Motor neuron (in vitro differentiated cells): ENCODE measurements at regions of chr10 and their contacts with region 1.

Region 1: GRCh38 chr10:28676968-28677887 is at the start of gene BAMBI:
- ATAC-seq: peak; percentile 92 to 95 (median 94)
- H3K4me3 ChIP-seq: peak within 1 kb of the TSS; percentile 69 to 84 (median 76)
- H3K27ac ChIP-seq: peak within 1 kb of the TSS in 1 of 2 donors; percentile 56
- H3K4me1 ChIP-seq: peaks cover 16 to 26% of the 10 kb centered on the region in 2 donors
- total RNA-seq, gene BAMBI: 0.97 to 47.8 (median 8.1) TPM

Region 2: GRCh38 chr10:28432210-28432676 is 245.0 kb before region 1 on chr10:
- in situ Hi-C with region 1: no loop called
- ATAC-seq: peak in 6 of 8 experiments; percentile 53 to 97 (median 82)
- H3K4me3 ChIP-seq: no peak overlapping the region
- H3K27ac ChIP-seq: no peak overlapping the region
- H3K4me1 ChIP-seq: no peaks in the 10 kb centered on the region

Region 3: GRCh38 chr10:28503114-28503513 is 174.1 kb before region 1 on chr10:
- in situ Hi-C with region 1: no loop called
- ATAC-seq: peak in 2 of 8 experiments; percentile 51 to 76
- H3K4me3 ChIP-seq: no peak overlapping the region
- H3K27ac ChIP-seq: no peak overlapping the region
- H3K4me1 ChIP-seq: no peaks in the 10 kb centered on the region

Region 4: DNA sequence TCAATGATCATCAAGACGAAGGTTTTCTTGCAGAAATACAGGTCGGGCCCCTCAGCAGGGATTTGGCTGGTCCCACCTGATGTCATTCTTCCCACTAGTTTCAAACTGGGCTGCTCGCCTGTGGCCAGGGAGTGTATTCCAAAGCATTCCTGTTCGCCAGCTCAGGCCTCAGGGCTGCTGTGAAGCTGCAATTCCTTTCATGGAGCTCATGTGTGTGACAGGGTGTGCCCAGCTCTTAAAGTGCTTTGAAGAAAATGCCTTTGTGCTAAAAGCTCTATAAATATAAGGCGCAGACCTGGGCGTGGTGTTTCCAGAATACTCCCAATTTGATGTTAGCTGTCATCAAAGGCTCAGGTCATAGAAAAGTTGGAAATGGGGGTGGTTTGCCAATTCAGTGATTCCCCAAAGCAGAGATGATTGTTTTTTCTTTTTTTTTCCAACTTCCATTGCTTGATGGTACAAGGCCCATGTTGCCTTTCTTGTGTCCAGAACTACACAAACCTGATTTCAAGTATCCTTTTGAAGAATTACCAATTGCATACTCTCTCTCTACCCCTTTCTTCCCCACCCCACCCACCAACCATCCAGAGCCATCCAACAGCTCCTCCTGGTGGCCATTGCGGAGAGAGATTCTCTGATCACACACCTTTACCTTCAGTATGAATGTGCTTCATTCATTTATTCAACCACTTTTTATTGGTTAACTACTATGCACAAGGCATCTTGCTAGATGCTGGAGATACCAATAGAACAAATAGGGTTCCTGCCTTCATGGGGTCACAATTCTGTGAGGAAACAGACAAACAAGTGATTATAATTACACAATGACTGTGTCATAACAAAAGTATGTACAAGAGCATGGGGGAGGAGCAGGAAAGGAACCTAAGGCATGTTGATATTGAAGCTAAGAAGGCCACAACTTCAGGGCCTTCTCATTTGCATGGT is 314.4 kb after region 1 on chr10:
- in situ Hi-C with region 1: loop called in 1 of 9 experiments (anchors 25 kb)
- ATAC-seq: peak in 4 of 8 experiments; percentile 35 to 97 (median 94)
- H3K4me3 ChIP-seq: no peak overlapping the region
- H3K27ac ChIP-seq: no peak overlapping the region
- H3K4me1 ChIP-seq: no peaks in the 10 kb centered on the region

Region 5: DNA sequence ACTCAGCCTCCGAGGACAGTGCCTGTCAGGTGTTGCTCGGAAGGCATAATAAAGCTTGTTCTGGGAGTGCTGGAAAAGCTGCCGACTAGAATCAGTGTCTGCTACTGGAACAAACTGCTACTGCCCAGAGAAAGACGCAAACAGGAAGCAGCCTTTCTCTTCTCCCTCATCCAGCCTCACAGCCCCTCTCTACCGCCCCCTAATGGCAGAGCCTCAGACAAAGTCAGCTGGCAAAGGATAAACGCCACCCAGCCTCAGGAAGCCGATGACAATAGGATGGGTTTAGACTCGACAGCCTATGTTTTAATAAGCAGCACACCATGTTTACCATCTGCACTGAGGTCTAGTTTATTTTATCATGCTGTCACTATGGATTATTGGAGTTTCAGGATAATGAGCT is 442.1 kb after region 1 on chr10:
- in situ Hi-C with region 1: loop called in 1 of 9 experiments (anchors 25 kb)
- ATAC-seq: no peak
- H3K4me3 ChIP-seq: no peak overlapping the region
- H3K27ac ChIP-seq: no peak overlapping the region
- H3K4me1 ChIP-seq: peaks cover 0 to 3% of the 10 kb centered on the region in 2 donors